ENCODE measurements at regions of chr16 and their contacts with region 1.

Region 1: DNA sequence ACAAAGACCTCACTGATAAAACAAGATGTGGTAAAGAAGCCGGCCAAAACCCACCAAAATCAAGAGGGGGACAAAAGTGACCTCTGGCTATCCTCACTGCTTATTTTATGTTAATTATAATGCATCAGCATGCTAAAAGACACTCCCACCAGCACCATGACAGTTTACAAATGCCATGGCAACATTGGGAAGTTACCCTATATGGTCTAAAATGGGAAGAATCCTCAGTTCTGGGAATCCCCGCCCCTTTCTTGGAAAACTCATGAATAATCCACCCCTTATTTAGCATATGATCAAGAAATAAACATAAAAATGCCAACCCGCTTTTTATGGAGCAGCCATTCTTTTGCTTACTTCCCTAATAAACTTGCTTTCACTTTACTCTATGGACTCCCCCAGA is 25.6 kb downstream of the CMTR2 start:
- DNase-seq: no peak
- H3K4me3 ChIP-seq: no peak overlapping the region
- H3K27ac ChIP-seq: no peak overlapping the region
- H3K4me1 ChIP-seq: no peaks in the 10 kb centered on the region
- H3K27me3 ChIP-seq: peaks cover 1 to 3% of the 10 kb centered on the region in 2 experiments
- CTCF ChIP-seq: no peak
- POLR2A ChIP-seq: no peak

Region 2: DNA sequence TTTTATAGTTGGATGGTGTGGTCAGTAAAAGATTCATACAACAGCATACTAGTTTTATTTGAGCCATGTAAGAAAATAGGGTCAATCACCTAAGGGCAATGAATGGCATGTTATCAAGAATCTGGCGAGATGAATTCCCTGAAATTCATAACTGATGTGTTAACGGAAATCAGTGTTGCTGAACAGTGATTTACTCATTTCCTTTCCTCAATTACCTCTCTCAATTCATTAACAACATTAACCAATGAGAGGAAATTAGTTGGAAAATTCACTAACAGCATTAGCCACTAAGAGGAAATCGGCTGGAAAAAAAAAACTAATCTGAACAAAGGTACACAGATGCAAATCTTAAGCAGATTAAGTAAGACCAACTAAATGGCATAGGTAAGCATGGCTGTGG is 19.4 kb after region 1 on chr16:
- CTCF ChIA-PET with region 1: interaction called, 3 read pairs
- POLR2A ChIA-PET with region 1: no interaction called
- dilution Hi-C with region 1: no loop called
- intact Hi-C with region 1: loop called (anchors 2 kb)
- DNase-seq: peak; percentile 81
- H3K4me3 ChIP-seq: no peak overlapping the region
- H3K27ac ChIP-seq: peak overlapping the region; percentile 34
- H3K4me1 ChIP-seq: peaks cover 31% of the 10 kb centered on the region
- H3K27me3 ChIP-seq: no peaks in the 10 kb centered on the region
- CTCF ChIP-seq: no peak
- POLR2A ChIP-seq: peak; percentile 57

Region 3: DNA sequence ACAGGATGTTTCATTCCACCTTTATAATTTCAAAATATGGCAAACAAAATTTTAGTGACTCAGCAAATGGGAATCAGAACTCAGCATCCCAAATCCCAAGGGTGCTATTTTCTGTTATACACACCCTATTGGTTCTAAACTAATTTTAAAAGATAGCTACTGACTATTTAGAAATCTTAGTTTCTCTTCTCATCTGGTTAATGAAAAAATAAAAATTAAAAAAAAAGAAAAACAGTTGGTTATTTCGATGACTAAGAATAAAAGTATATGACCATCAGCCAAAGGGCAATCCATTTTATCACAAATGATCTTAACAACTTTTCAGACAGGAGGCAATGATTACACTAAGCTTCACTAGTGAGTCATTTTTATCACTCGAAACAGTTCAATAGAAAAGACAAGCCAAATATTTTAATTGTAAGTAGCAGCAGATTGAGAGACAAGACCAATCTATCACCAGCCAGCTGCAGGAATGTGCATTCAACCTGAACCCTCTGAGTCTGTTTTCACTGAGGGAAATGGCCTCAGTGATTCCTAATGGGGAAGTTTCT is 445.7 kb after region 1 on chr16:
- CTCF ChIA-PET with region 1: no interaction called
- POLR2A ChIA-PET with region 1: no interaction called
- dilution Hi-C with region 1: no loop called
- intact Hi-C with region 1: no loop called
- DNase-seq: peak; percentile 50
- H3K4me3 ChIP-seq: no peak overlapping the region
- H3K27ac ChIP-seq: no peak overlapping the region
- H3K4me1 ChIP-seq: peaks cover 12% of the 10 kb centered on the region
- H3K27me3 ChIP-seq: no peaks in the 10 kb centered on the region
- CTCF ChIP-seq: no peak
- POLR2A ChIP-seq: no peak

Measured in endothelial cell of umbilical vein (primary cell).